HEK293 (cell line): ENCODE measurements at regions of chr21 and their contacts with region 1.

Region 1: GRCh38 chr21:39313571-39314142 is at the start of gene BRWD1:
- H3K4me3 ChIP-seq: peak within 1 kb of the TSS; percentile 78
- H3K27ac ChIP-seq: peak within 1 kb of the TSS; percentile 81
- H3K4me1 ChIP-seq: peaks cover 6% of the 10 kb centered on the region; the same call in 1 of the 2 replicates
- CTCF ChIP-seq: peak; percentile 94

Region 2: GRCh38 chr21:39183237-39184007 is 130.2 kb before region 1 on chr21 and contains the start of gene PSMG1:
- CTCF ChIA-PET with region 1: no interaction called
- POLR2A ChIA-PET with region 1: interaction called, 31 read pairs
- H3K4me3 ChIP-seq: peak within 1 kb of the TSS; percentile 89
- H3K27ac ChIP-seq: peak within 1 kb of the TSS; percentile 86
- H3K4me1 ChIP-seq: 0 out of 2 replicates have a peak, but pooled peaks cover 3% of the 10 kb centered on the region
- CTCF ChIP-seq: peak; percentile 66

Region 3: GRCh38 chr21:39296891-39297290 is 16.8 kb before region 1 on chr21:
- CTCF ChIA-PET with region 1: no interaction called
- POLR2A ChIA-PET with region 1: interaction called, 11 read pairs
- H3K4me3 ChIP-seq: no peak overlapping the region
- H3K27ac ChIP-seq: no peak overlapping the region
- H3K4me1 ChIP-seq: no peaks in the 10 kb centered on the region
- CTCF ChIP-seq: no peak

Region 4: DNA sequence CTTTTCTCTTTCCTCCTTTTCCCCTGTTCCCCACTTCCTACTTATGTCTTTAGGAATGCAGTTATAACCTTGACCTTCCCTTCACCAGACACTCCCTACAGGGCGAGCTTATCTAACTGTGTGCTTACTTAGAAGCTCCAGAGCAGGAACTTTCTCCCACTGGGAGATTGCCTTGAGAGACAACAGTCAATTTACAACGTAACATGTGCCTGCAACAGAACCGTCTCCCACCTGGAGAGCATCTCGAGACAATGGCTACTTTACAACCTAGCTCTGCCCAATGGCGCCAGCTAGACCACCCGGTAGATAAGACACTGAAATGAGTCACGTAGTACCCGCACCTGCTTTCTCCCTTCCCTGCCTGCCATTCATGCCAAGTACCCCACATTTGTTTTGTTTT is 18.5 kb after region 1 on chr21:
- CTCF ChIA-PET with region 1: no interaction called
- POLR2A ChIA-PET with region 1: interaction called, 17 read pairs
- H3K4me3 ChIP-seq: no peak overlapping the region
- H3K27ac ChIP-seq: no peak overlapping the region
- H3K4me1 ChIP-seq: peaks cover 5% of the 10 kb centered on the region; the same call in 1 of the 2 replicates
- CTCF ChIP-seq: no peak

Region 5: GRCh38 chr21:39349211-39350093 is 35.8 kb after region 1 on chr21:
- CTCF ChIA-PET with region 1: interaction called, 4 read pairs
- POLR2A ChIA-PET with region 1: interaction called, 79 read pairs
- H3K4me3 ChIP-seq: peak overlapping the region; percentile 61
- H3K27ac ChIP-seq: peak overlapping the region; percentile 86
- H3K4me1 ChIP-seq: 0 out of 2 replicates have a peak, but pooled peaks cover 3% of the 10 kb centered on the region
- CTCF ChIP-seq: no peak

Region 6: DNA sequence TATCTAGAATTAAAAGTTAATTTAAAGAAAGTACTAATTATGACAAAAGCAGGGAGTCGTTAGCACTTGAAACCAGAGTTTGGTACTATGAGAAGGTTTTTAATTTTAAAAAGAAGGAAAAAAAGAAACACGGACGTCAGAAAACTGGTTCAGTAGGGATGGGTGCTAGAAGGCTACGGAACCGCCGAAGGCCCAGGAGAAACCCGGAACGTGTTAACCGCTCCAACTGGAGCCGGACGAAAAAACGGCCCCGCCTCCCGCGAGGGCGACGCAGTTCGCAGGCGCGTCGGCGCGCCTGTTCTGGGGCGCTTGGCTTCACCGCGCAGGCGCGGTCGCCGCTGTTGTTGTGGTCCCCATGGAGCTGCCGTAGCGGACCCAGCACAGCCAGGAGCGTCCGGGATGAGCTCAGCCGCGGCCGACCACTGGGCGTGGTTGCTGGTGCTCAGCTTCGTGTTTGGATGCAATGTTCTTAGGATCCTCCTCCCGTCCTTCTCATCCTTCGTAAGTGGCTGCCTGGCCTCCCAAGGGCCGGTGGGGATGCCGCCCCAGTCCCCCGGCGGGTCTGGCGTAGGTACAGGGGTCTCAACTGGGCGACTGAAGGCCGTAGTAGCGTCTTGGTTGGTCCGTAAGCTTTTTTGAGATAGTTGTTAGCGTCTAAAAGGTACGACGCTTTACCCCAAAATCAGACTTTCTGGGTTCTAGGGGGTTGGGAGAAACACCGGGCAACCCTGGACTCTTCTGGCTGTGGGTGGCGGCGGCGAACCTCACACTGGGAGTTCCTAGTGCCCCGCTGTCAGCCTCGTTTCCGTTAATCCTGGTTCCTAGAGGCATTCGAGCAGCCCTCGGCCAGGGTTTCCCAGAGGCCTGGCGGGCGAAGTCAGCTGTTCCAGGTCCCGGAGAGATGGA is 66.6 kb after region 1 on chr21:
- CTCF ChIA-PET with region 1: interaction called, 3 read pairs
- POLR2A ChIA-PET with region 1: interaction called, 32 read pairs
- H3K4me3 ChIP-seq: peak overlapping the region; percentile 72
- H3K27ac ChIP-seq: peak overlapping the region; percentile 53
- H3K4me1 ChIP-seq: peaks cover 2% of the 10 kb centered on the region; the same call in 1 of the 2 replicates
- CTCF ChIP-seq: no peak

Region 7: DNA sequence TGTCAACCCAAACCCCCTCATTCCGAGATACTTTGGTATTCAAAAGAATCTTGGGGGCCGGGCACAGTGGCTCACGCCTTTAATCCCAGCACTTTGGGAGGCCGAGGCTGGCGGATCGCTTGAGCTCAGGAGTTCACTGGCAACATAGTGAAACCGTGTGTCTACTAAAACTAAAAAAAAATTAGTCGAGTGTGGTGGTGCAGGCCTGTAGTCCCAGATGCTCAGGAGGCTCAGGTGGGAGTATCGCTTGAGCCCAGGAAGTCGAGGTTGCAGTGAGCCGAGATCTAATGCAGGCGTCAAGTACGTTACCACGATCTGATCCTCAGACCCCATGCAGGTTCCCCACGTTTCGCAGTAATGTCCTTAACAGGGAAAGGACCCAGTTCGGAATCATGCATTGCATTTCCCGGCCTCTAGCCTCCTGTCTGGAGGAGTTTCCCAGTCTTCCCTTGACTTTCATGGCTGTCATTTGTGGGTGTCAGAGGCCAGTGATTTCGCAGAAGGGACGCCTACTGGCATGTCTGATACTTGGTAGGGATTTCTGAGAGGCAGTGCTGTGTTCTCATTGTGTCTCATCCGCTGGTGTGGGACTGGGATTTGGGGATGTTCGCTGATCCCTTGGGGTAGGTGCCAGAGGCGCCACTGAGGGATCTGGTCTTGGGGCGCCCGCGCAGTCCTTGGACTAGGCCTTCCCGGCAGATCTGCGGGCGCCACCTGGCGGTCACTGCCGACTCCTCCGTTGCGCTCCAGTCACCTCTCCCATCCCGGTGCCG is 74.6 kb after region 1 on chr21:
- CTCF ChIA-PET with region 1: interaction called, 4 read pairs
- POLR2A ChIA-PET with region 1: interaction called, 32 read pairs
- H3K4me3 ChIP-seq: peak overlapping the region; percentile 30
- H3K27ac ChIP-seq: peak overlapping the region; percentile 65
- H3K4me1 ChIP-seq: peaks cover 14% of the 10 kb centered on the region
- CTCF ChIP-seq: peak; percentile 98